Heart right ventricle (tissue), 16 donors: ENCODE measurements at regions of chr9 and their contacts with region 1.

Region 1: GRCh38 chr9:13450723-13451122 is 171.2 kb upstream of the MPDZ start:
- DNase-seq: no peak
- ATAC-seq: no peak
- H3K4me3 ChIP-seq: no peak overlapping the region
- H3K27ac ChIP-seq: no peak overlapping the region
- H3K4me1 ChIP-seq: peaks cover 0 to 43% (median 27%) of the 10 kb centered on the region in 9 donors
- H3K27me3 ChIP-seq: no peaks in the 10 kb centered on the region
- CTCF ChIP-seq: no peak

Region 2: DNA sequence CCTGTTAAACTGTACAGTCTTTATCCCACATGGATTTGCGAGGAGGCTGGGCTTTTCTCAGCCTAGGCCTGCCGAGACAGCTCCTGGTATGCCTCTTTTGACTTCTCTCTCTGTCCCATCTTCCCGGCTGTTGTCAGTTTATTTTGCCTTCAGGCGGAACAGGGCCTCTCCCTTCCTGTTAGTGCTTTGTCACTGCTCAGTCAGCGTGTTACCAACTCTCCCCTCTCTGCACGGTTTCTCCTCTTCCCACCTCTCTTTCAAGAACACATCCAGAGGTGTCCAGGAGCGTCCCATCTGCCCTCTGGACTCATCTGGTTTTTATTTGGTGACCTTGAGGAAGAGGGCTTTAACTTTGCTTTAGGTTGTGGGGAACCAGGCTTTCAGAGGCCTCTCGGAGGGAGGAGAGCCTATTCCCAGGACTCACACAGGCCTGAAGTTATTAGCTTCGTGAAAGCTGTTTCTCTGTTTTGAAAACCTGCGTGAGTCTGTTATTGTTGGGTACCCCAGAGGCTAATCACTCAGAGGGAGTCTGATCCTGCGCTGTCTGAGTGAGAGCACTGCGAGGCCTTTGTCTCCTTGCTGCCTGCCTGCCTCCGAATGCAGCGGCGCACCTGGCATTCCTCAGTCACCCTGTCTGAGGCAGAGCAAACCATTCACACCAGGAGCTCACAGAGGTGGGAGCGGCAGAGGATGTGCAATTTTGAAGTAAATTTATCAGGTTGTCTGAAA is 63.2 kb after region 1 on chr9:
- intact Hi-C with region 1: loop called in 1 of 10 experiments (anchors 5 kb)
- DNase-seq: peak; percentile 6 to 17
- ATAC-seq: peak; percentile 34 to 73 (median 58)
- H3K4me3 ChIP-seq: no peak overlapping the region
- H3K27ac ChIP-seq: peak overlapping the region; percentile 14 to 82 (median 68)
- H3K4me1 ChIP-seq: peaks cover 3 to 25% (median 9%) of the 10 kb centered on the region in 9 donors
- H3K27me3 ChIP-seq: no peaks in the 10 kb centered on the region
- CTCF ChIP-seq: no peak

Region 3: GRCh38 chr9:13588151-13589033 is 137.7 kb after region 1 on chr9:
- intact Hi-C with region 1: loop called in 2 of 10 experiments (anchors 5 to 10 kb)
- DNase-seq: peak in 1 of 2 donors; percentile 48
- ATAC-seq: peak; percentile 50 to 82 (median 72)
- H3K4me3 ChIP-seq: no peak overlapping the region
- H3K27ac ChIP-seq: peak overlapping the region in 8 of 10 donors; percentile 16 to 80 (median 67)
- H3K4me1 ChIP-seq: peaks cover 6 to 56% (median 34%) of the 10 kb centered on the region in 9 donors
- H3K27me3 ChIP-seq: no peaks in the 10 kb centered on the region
- CTCF ChIP-seq: no peak

Region 4: GRCh38 chr9:13651969-13652663 is 201.4 kb after region 1 on chr9:
- intact Hi-C with region 1: loop called in 1 of 10 experiments (anchors 10 kb)
- DNase-seq: peak; percentile 24 to 63
- ATAC-seq: peak; percentile 80 to 98 (median 96)
- H3K4me3 ChIP-seq: no peak overlapping the region
- H3K27ac ChIP-seq: peak overlapping the region; percentile 38 to 83 (median 72)
- H3K4me1 ChIP-seq: peaks cover 0 to 12% (median 0%) of the 10 kb centered on the region in 9 donors
- H3K27me3 ChIP-seq: no peaks in the 10 kb centered on the region
- CTCF ChIP-seq: no peak

Region 5: GRCh38 chr9:13878241-13878711 is 427.6 kb after region 1 on chr9:
- intact Hi-C with region 1: no loop called
- DNase-seq: no peak
- ATAC-seq: no peak
- H3K4me3 ChIP-seq: no peak overlapping the region
- H3K27ac ChIP-seq: no peak overlapping the region
- H3K4me1 ChIP-seq: peaks cover 0 to 6% (median 0%) of the 10 kb centered on the region in 9 donors
- H3K27me3 ChIP-seq: no peaks in the 10 kb centered on the region
- CTCF ChIP-seq: no peak

Region 6: DNA sequence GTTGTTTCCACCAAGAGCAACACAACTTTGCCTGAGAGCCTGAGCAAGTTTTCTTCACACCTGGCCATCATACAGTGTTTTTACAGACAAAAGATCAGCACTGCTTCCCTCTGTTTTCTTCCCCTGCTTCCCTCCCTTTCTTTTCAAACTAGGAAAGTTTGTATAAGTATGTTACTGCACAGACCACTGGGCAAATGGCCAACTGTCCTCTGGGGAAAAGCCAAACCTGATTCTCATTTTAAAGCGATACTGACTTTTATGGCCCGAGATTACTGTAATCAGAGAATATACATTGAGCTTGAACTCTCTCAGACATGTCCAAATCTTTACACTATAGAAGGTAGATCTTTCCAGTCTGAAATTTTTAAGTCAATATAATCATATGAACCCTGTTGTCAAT is 448.2 kb after region 1 on chr9:
- intact Hi-C with region 1: loop called in 1 of 10 experiments (anchors 10 kb)
- DNase-seq: peak in 1 of 2 donors; percentile 26
- ATAC-seq: no peak
- H3K4me3 ChIP-seq: no peak overlapping the region
- H3K27ac ChIP-seq: peak overlapping the region in 9 of 10 donors; percentile 37 to 86 (median 70)
- H3K4me1 ChIP-seq: peaks cover 0 to 64% (median 41%) of the 10 kb centered on the region in 9 donors
- H3K27me3 ChIP-seq: no peaks in the 10 kb centered on the region
- CTCF ChIP-seq: no peak

Region 7: DNA sequence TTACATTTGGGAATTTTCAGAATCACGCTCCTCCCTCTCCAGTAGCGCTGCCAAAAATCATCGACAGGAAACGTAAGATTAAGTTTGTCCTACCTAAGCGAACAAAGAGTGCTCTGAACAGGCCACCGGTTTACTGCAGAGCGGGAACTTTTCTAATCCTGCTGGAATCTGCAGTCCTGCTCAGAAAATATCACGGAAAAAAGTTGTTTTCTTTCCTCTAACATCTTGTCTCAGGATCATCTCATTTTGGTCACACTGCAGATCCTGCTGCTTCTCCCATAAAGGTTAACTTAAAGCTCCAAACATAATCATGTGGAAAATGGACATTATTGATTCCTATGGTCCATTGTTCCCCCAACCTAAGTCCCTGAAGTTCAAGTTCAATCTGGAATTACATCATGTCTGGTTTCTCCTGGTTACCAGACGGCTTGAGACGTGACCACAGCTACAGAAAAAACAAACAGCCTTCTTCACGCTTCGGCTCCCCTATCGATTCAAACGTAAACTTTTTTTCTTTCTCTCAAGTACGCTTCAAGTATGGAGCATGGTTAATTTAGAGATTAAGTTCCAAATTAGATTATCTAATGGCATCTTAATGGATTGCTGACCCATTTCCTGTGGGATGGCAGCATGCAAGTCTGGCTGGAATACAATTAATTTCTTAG is 645.7 kb after region 1 on chr9:
- intact Hi-C with region 1: loop called in 2 of 10 experiments (anchors 10 kb)
- DNase-seq: peak in 1 of 2 donors; percentile 63
- ATAC-seq: peak; percentile 56 to 93 (median 82)
- H3K4me3 ChIP-seq: peak overlapping the region in 8 of 10 donors; percentile 3 to 43 (median 29)
- H3K27ac ChIP-seq: peak overlapping the region; percentile 50 to 93 (median 81)
- H3K4me1 ChIP-seq: peaks cover 3 to 85% (median 55%) of the 10 kb centered on the region in 9 donors
- H3K27me3 ChIP-seq: no peaks in the 10 kb centered on the region
- CTCF ChIP-seq: no peak

Region 8: DNA sequence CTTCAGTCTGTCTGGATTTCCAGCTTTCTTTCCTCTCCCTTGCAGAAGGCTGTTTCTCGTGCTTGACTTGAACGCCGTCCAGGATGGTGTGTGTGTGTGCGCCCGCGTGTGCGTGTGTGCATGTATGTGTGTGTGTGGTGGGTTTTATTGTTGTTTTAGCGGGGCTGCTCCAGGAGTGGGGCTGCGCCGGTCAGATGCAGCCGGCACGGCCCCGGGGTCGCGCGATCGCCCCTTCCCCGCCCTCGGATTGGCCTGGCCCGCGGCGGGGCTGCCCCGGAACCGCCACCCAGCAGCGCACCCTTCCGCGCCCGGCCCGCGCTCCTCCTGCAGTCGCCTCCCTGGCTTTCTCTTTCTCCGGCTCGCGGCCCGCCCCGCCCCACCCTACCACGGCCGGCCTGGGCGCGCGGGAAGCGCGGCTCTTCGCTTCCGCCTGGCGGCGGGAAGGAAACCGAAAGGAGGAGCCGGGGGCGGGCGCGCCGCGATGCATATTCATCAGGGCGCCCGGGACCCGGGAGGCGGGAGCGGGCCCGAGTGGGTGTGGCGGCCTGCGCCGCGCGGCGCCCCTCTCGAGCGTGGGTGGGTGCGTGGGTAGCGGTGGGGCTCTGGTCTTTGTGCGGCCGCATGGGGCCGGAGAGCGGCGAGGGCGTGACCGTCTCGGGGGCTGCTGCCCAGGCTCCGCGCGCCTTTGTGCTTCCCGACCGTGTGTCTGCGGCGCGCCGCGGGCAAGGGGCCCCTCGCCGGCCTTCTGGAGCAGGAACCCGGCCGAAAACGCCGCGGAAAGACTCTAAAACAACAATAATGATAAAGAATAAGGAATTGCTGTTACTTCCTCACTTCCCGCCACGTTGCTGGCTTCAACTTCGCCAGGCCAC is 871.7 kb after region 1 on chr9:
- intact Hi-C with region 1: loop called in 1 of 10 experiments (anchors 10 kb)
- DNase-seq: peak; percentile 93 to 95
- ATAC-seq: peak; percentile 90 to 98 (median 92)
- H3K4me3 ChIP-seq: peak overlapping the region; percentile 45 to 89 (median 76)
- H3K27ac ChIP-seq: peak overlapping the region; percentile 91 to 100 (median 98)
- H3K4me1 ChIP-seq: peaks cover 4 to 87% (median 60%) of the 10 kb centered on the region in 9 donors
- H3K27me3 ChIP-seq: peaks cover 0 to 26% (median 0%) of the 10 kb centered on the region in 7 donors
- CTCF ChIP-seq: peak; percentile 29 to 79 (median 58)